GM12878 (cell line): ENCODE measurements at regions of chr11 and their contacts with region 1.

Region 1: GRCh38 chr11:107799218-107799859 is 59.2 kb downstream of the SLC35F2 start:
- DNase-seq: peak; percentile 12
- ATAC-seq: peak; percentile 97
- H3K4me3 ChIP-seq: no peak overlapping the region
- H3K27ac ChIP-seq: no peak overlapping the region
- H3K4me1 ChIP-seq: no peaks in the 10 kb centered on the region
- H3K27me3 ChIP-seq: no peaks in the 10 kb centered on the region
- CTCF ChIP-seq: peak; percentile 91 to 96 (median 95)
- EP300 ChIP-seq: no peak
- POLR2A ChIP-seq: no peak
- RAD21 ChIP-seq: peak; percentile 71

Region 2: DNA sequence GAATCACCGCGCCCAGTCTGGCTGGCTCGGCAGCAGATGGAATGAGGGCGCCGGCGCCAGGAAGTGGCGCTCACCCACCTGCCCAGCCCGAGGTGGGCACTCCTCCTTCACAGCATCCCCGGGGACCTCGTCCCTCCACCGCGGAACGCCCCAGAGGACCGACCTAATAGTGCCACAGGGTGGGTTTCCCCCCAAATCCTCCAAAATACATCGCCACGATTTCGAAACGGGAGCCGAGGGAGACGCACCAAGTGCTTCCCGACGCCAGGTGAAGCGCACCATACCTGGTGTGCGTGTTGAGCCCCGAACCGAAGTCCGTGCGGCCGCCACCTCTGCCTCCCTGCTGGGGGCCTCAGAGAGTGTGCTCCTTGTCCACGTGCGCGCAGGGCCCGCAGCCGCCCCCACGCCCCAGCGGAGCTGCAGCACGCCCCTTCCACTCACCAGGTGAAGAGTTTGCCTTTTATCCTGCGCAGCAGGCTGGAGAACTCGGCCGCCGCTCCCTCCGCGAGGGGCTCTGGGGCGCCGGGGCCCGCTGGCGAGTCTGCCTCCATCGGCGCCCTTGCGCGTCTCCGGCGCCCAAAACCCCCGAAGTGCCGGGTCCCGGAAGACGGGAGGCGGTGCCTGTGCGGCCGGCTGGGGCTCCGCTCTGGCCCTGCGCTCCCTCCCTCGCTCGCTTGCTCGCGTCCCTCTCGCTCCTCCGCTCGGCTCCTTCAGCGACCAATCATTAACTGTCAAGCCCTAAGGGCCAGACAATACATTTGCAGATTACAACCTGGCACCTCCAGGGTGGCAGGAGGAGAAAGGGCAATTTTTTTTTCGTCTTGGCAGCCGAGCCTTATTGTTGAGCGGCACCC is 59.1 kb after region 1 on chr11 and contains the start of gene SLC35F2:
- CTCF ChIA-PET with region 1: interaction called, 3 read pairs
- POLR2A ChIA-PET with region 1: no interaction called
- RAD21 ChIA-PET with region 1: no interaction called
- SMC1A ChIA-PET with region 1: interaction called, 8 read pairs
- in situ Hi-C with region 1: no loop called
- intact Hi-C with region 1: loop called (anchors 5 kb)
- DNase-seq: peak; percentile 80
- ATAC-seq: peak; percentile 92
- H3K4me3 ChIP-seq: peak within 1 kb of the TSS; percentile 93
- H3K27ac ChIP-seq: peak within 1 kb of the TSS; percentile 66
- H3K4me1 ChIP-seq: peaks cover 11% of the 10 kb centered on the region; the same call in 1 of the 2 replicates
- H3K27me3 ChIP-seq: no peaks in the 10 kb centered on the region
- CTCF ChIP-seq: peak in 2 of 3 experiments; percentile 12 to 19; a peak in 3 of 6 replicates
- EP300 ChIP-seq: no peak
- POLR2A ChIP-seq: peak; percentile 90
- RAD21 ChIP-seq: no peak
- polyA plus RNA-seq, gene SLC35F2: 15.2 to 25.8 TPM

Region 3: DNA sequence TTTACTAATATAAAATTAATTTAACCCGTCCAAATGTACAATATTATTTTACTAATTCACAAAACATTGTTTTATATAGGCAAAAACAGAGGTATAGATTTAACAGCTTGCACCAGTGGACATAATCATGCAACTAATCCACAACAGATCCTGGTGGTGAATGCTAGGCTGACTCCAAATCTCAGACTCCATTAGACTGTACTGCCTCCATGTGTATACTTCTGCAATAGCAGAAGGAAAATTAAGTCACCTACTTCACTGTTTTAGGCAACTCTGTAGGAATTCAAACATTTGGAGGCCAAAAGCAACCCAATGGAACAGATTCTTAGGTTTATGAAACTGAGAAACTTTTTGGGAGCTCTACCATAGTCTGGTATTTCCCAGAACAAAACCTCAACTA is 98.9 kb after region 1 on chr11:
- CTCF ChIA-PET with region 1: interaction called, 3 read pairs
- POLR2A ChIA-PET with region 1: interaction called, 4 read pairs
- RAD21 ChIA-PET with region 1: no interaction called
- SMC1A ChIA-PET with region 1: interaction called, 5 read pairs
- in situ Hi-C with region 1: no loop called
- intact Hi-C with region 1: loop called (anchors 5 kb)
- DNase-seq: peak; percentile 24
- ATAC-seq: peak; percentile 93
- H3K4me3 ChIP-seq: no peak overlapping the region
- H3K27ac ChIP-seq: no peak overlapping the region
- H3K4me1 ChIP-seq: no peaks in the 10 kb centered on the region; the same call in 1 of the 2 replicates
- H3K27me3 ChIP-seq: no peaks in the 10 kb centered on the region
- CTCF ChIP-seq: peak; percentile 63 to 82 (median 67); a peak in 5 of 6 replicates
- EP300 ChIP-seq: no peak
- POLR2A ChIP-seq: no peak
- RAD21 ChIP-seq: peak; percentile 92